SK-N-SH (cell line): ENCODE measurements at regions of chr1 and their contacts with region 1.

Region 1: GRCh38 chr1:2314803-2315673 is 76.3 kb downstream of the MORN1 start:
- DNase-seq: peak; percentile 97
- H3K4me3 ChIP-seq: peak overlapping the region; percentile 50 to 51; a peak in 3 of 4 replicates
- H3K27ac ChIP-seq: peak overlapping the region in 1 of 2 experiments; percentile 83; a peak in 2 of 4 replicates
- H3K4me1 ChIP-seq: peaks cover 0 to 49% of the 10 kb centered on the region in 2 experiments; a peak in 1 of 4 replicates
- H3K27me3 ChIP-seq: no peaks in the 10 kb centered on the region
- CTCF ChIP-seq: peak; percentile 56
- EP300 ChIP-seq: no peak
- RAD21 ChIP-seq: no peak

Region 2: GRCh38 chr1:1318131-1318652 is 996.8 kb before region 1 on chr1:
- CTCF ChIA-PET with region 1: no interaction called
- POLR2A ChIA-PET with region 1: no interaction called
- DNase-seq: no peak
- H3K4me3 ChIP-seq: no peak overlapping the region
- H3K27ac ChIP-seq: peak overlapping the region in 1 of 2 experiments; percentile 86; a peak in 2 of 4 replicates
- H3K4me1 ChIP-seq: peaks cover 4 to 8% of the 10 kb centered on the region in 2 experiments; a peak in 2 of 4 replicates
- H3K27me3 ChIP-seq: no peaks in the 10 kb centered on the region
- CTCF ChIP-seq: no peak
- EP300 ChIP-seq: no peak
- RAD21 ChIP-seq: no peak

Region 3: GRCh38 chr1:2061065-2061778 is 253.8 kb before region 1 on chr1:
- CTCF ChIA-PET with region 1: no interaction called
- POLR2A ChIA-PET with region 1: no interaction called
- DNase-seq: no peak
- H3K4me3 ChIP-seq: no peak overlapping the region
- H3K27ac ChIP-seq: no peak overlapping the region
- H3K4me1 ChIP-seq: no peaks in the 10 kb centered on the region
- H3K27me3 ChIP-seq: no peaks in the 10 kb centered on the region
- CTCF ChIP-seq: no peak
- EP300 ChIP-seq: no peak
- RAD21 ChIP-seq: no peak

Region 4: GRCh38 chr1:2300851-2301606 is 14.0 kb before region 1 on chr1:
- CTCF ChIA-PET with region 1: interaction called, 11 read pairs
- POLR2A ChIA-PET with region 1: interaction called, 4 read pairs
- DNase-seq: no peak
- H3K4me3 ChIP-seq: no peak overlapping the region
- H3K27ac ChIP-seq: peak overlapping the region in 1 of 2 experiments; percentile 83; a peak in 1 of 4 replicates
- H3K4me1 ChIP-seq: peaks cover 0 to 46% of the 10 kb centered on the region in 2 experiments; a peak in 1 of 4 replicates
- H3K27me3 ChIP-seq: no peaks in the 10 kb centered on the region
- CTCF ChIP-seq: no peak
- EP300 ChIP-seq: no peak
- RAD21 ChIP-seq: no peak